ENCODE measurements at regions of chr2 and their contacts with region 1.

Region 1: DNA sequence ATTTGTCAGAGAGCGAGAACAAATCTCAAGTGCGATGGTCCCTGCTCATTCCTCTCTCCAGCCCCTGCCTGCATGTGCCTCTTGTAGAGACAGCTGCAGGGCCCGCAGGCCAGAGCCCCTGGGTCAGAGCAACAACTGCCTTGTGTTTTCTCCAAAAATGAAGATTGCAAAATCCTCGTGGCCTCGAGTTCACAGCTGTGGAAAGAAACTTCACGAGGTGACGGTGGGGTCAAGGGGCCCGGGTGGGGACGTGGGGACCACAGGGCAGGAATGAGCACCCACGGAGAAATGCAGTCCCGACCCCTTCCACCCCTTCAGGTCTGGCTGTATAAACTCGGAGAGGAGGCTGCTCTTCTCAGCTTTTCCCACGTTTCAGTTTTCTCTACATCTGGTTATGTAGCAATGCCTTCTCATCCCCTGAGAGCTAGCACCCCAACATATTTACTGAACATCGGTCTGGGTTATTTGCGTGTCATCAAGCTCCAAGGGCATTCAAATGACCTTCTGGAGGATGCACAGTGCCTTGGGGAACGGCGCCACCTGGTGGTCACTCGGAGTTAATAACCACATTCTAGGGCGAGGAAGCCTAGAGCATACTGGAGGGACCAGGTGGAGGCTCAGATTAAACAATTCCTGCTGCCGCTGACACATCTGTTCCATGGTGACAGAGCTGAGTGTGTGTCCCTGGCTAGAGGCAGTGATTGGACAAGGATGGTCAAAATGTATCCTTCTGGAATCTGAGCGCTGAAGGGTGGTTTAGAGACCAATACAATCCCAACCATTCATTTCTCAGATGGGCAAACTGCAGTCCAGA is 91.4 kb upstream of the CYRIA start:
- DNase-seq: peak; percentile 83 to 85
- H3K4me3 ChIP-seq: no peak overlapping the region
- H3K27ac ChIP-seq: peak overlapping the region; percentile 6 to 40
- H3K4me1 ChIP-seq: no peaks in the 10 kb centered on the region
- H3K27me3 ChIP-seq: no peaks in the 10 kb centered on the region
- CTCF ChIP-seq: peak; percentile 78 to 91 (median 84)
- POLR2A ChIP-seq: no peak

Region 2: GRCh38 chr2:16438613-16439321 is 318.3 kb before region 1 on chr2:
- intact Hi-C with region 1: no loop called
- DNase-seq: no peak
- H3K4me3 ChIP-seq: no peak overlapping the region
- H3K27ac ChIP-seq: no peak overlapping the region
- H3K4me1 ChIP-seq: no peaks in the 10 kb centered on the region
- H3K27me3 ChIP-seq: no peaks in the 10 kb centered on the region
- CTCF ChIP-seq: no peak
- POLR2A ChIP-seq: no peak

Region 3: GRCh38 chr2:16559278-16560067 is 197.6 kb before region 1 on chr2:
- intact Hi-C with region 1: loop called (anchors 5 kb)
- DNase-seq: peak; percentile 68 to 87
- H3K4me3 ChIP-seq: no peak overlapping the region
- H3K27ac ChIP-seq: peak overlapping the region; percentile 33 to 54
- H3K4me1 ChIP-seq: peaks cover 4 to 5% of the 10 kb centered on the region in 2 donors
- H3K27me3 ChIP-seq: no peaks in the 10 kb centered on the region
- CTCF ChIP-seq: no peak
- POLR2A ChIP-seq: no peak

Region 4: DNA sequence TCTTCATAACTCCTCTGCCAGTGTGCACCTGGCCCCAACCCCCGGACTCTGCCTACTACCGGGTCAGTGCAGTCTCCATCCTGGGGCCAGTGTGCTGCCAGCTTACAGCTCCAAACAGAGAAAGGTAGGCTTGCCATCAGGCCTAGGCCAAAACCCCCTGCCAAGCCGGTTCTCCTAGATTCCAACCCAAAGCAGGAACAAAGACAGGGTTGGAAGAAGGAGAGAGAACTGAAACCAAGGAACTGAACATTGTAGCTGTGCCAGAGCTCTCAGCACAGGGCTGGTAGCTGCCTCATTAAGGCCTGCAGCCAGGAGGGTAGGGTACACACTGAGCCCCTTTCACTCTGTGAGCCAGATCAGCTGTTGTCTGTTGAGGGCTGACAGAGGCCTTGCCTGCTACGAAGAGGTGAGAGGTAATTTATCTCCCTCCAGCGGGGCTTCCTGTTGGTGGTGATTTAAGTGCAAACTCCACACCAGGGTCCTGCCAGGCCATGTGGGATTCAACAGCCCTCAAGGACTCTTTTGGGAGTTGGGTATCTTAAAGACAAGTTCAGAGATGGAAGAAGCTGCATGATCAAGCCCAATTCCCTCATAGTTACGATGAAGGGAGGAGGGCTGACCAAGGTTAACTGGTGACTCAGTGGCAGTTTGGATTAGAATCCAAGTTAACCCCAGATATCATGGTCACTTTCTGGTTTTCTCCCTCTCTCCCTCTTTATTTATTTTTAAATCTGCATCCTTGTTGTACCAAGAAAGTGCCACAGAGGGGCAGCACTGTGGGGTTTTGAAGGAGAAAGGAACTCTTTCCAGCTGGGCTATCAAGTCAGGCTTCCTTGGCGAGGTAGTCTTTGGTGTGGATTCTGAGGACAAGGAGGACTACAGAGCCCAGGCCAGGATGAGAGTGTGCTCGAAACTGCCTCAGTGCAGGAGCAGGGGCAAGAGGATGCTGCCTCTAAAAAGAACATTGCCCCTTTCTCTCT is 139.5 kb before region 1 on chr2:
- intact Hi-C with region 1: loop called (anchors 5 kb)
- DNase-seq: peak; percentile 34 to 36
- H3K4me3 ChIP-seq: no peak overlapping the region
- H3K27ac ChIP-seq: peak overlapping the region in 1 of 2 donors; percentile 37
- H3K4me1 ChIP-seq: no peaks in the 10 kb centered on the region
- H3K27me3 ChIP-seq: no peaks in the 10 kb centered on the region
- CTCF ChIP-seq: peak; percentile 20 to 50 (median 35)
- POLR2A ChIP-seq: no peak

Region 5: GRCh38 chr2:16709769-16710168 is 47.3 kb before region 1 on chr2:
- intact Hi-C with region 1: no loop called
- DNase-seq: no peak
- H3K4me3 ChIP-seq: no peak overlapping the region
- H3K27ac ChIP-seq: no peak overlapping the region
- H3K4me1 ChIP-seq: no peaks in the 10 kb centered on the region
- H3K27me3 ChIP-seq: no peaks in the 10 kb centered on the region
- CTCF ChIP-seq: no peak
- POLR2A ChIP-seq: no peak